ENCODE measurements at regions of chr2 and their contacts with region 1.

Region 1: GRCh38 chr2:232876078-232876977 is 6.3 kb downstream of the SNORC start:
- DNase-seq: peak in 1 of 6 donors; percentile 66
- ATAC-seq: peak; percentile 36 to 76 (median 52)
- H3K4me3 ChIP-seq: peak overlapping the region; percentile 18 to 46 (median 36)
- H3K27ac ChIP-seq: no peak overlapping the region
- H3K4me1 ChIP-seq: peaks cover 0 to 3% (median 0%) of the 10 kb centered on the region in 3 donors
- H3K27me3 ChIP-seq: no peaks in the 10 kb centered on the region
- CTCF ChIP-seq: no peak

Region 2: DNA sequence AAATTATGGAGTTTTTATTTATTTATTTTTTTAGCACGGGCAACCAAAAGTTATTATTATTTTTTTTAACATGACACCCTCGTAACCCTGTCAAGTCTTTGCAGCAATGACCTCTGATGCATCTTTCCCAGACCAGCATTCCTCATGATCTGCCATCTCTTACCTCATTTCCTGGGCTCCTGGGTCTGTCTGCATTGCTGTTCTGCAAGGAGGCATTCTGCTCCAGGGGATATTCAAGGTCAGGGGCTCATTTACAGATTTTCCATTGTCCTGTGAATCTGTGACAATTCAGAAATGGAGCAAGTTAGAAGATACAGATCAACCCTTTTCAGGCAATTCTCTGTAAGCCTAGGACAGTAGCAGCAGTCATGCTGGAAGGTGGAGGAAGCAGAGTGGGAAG is 93.7 kb after region 1 on chr2:
- intact Hi-C with region 1: no loop called
- DNase-seq: no peak
- ATAC-seq: no peak
- H3K4me3 ChIP-seq: no peak overlapping the region
- H3K27ac ChIP-seq: no peak overlapping the region
- H3K4me1 ChIP-seq: no peaks in the 10 kb centered on the region
- H3K27me3 ChIP-seq: no peaks in the 10 kb centered on the region
- CTCF ChIP-seq: no peak

Region 3: GRCh38 chr2:232994446-232994845 is 118.1 kb after region 1 on chr2:
- intact Hi-C with region 1: no loop called
- DNase-seq: peak in 1 of 6 donors; percentile 35
- ATAC-seq: no peak
- H3K4me3 ChIP-seq: no peak overlapping the region
- H3K27ac ChIP-seq: no peak overlapping the region
- H3K4me1 ChIP-seq: no peaks in the 10 kb centered on the region
- H3K27me3 ChIP-seq: no peaks in the 10 kb centered on the region
- CTCF ChIP-seq: no peak

Region 4: GRCh38 chr2:233049194-233049761 is 172.9 kb after region 1 on chr2:
- intact Hi-C with region 1: loop called in 1 of 3 experiments (anchors 10 kb)
- DNase-seq: peak in 1 of 6 donors; percentile 28
- ATAC-seq: peak in 1 of 4 donors; percentile 24
- H3K4me3 ChIP-seq: no peak overlapping the region
- H3K27ac ChIP-seq: no peak overlapping the region
- H3K4me1 ChIP-seq: no peaks in the 10 kb centered on the region
- H3K27me3 ChIP-seq: peaks cover 0 to 4% (median 0%) of the 10 kb centered on the region in 4 donors
- CTCF ChIP-seq: no peak